OCI-LY7 (cell line): ENCODE measurements at regions of chr18 and their contacts with region 1.

Region 1: GRCh38 chr18:63763831-63764600 is 11.2 kb upstream of the SERPINB7 start:
- DNase-seq: no peak
- H3K4me3 ChIP-seq: no peak overlapping the region
- H3K27ac ChIP-seq: no peak overlapping the region
- H3K4me1 ChIP-seq: no peaks in the 10 kb centered on the region
- CTCF ChIP-seq: no peak

Region 2: GRCh38 chr18:63741769-63742168 is 22.2 kb before region 1 on chr18:
- CTCF ChIA-PET with region 1: no interaction called
- POLR2A ChIA-PET with region 1: interaction called, 10 read pairs
- intact Hi-C with region 1: no loop called
- DNase-seq: no peak
- H3K4me3 ChIP-seq: no peak overlapping the region
- H3K27ac ChIP-seq: no peak overlapping the region
- H3K4me1 ChIP-seq: no peaks in the 10 kb centered on the region
- CTCF ChIP-seq: no peak

Region 3: DNA sequence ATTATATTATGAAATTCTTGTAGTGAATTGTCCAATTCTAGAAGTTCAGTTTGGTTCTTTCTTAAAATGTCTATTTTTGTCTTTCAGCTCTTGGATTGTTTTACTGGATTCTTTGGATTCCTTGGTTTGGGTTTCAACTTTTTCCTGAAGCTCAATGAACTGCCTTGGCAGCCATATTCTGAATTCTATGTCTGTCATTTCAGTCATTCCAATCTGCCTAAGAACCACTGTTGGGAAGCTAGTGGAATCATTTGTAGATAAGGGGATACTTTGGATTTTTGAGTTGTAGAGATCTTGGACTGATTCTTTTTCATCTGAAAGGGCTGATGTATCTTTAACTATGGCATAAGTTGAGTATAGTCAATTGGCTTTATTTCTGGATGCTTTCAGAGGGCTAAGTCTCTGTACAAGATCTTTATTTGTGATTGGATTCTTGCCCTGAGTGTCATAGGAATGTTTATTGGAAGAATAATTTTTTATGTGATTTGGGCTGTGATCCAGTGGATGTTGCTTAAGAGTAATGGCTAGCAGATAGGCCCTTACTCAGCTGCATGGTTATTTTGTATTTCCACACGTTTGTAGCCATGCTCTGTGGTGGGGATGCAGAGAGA is 53.5 kb after region 1 on chr18:
- CTCF ChIA-PET with region 1: no interaction called
- POLR2A ChIA-PET with region 1: no interaction called
- intact Hi-C with region 1: no loop called
- DNase-seq: no peak
- H3K4me3 ChIP-seq: no peak overlapping the region
- H3K27ac ChIP-seq: no peak overlapping the region
- H3K4me1 ChIP-seq: peaks cover 5% of the 10 kb centered on the region
- CTCF ChIP-seq: no peak

Region 4: GRCh38 chr18:64134044-64134747 is 370.2 kb after region 1 on chr18:
- CTCF ChIA-PET with region 1: no interaction called
- POLR2A ChIA-PET with region 1: no interaction called
- intact Hi-C with region 1: no loop called
- DNase-seq: no peak
- H3K4me3 ChIP-seq: no peak overlapping the region
- H3K27ac ChIP-seq: no peak overlapping the region
- H3K4me1 ChIP-seq: no peaks in the 10 kb centered on the region
- CTCF ChIP-seq: no peak